Pancreas (tissue), 10 donors: ENCODE measurements at regions of chr14 and their contacts with region 1.

Region 1: DNA sequence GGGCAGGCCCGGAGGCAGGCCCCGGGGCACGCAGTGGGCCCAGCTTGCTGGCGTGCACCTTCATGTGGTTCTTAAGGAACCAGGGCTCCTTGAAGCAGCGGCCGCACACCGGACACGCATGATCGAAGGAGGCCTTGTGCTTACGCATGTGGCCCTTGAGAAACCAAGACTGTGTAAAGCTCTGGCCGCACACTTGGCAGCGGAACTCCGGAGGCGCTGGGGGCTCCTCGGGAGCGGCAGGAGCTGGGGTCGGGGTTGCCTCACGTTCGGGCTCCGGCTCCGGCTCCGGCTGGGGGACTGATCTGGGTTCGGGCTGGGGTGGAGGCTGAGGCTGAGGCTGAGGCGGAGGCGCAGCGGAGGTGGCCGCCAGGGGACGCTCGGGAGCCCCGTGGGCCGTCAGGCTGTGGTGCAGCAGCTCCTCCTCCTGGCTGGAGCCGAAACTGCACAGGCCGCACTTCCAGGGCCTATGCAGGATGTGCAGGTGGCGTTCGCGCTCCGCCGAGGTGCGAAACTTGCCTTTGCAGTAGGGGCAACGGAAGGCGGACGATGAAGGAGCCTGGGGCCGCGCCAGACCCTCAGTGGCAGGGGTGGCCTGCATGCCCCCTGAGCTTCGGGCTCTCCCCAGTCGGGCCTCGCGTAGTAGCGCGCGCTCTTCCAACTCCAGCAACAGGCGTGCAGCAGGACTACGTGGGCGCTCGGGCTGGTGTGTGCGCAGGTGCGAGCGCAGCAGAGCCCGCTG is 6.0 kb downstream of the ZNF219 start:
- DNase-seq: peak; percentile 75 to 98 (median 91)
- ATAC-seq: peak; percentile 86 to 97 (median 92)
- H3K4me3 ChIP-seq: no peak overlapping the region
- H3K27ac ChIP-seq: no peak overlapping the region
- H3K4me1 ChIP-seq: peaks cover 0 to 3% (median 0%) of the 10 kb centered on the region in 3 donors
- H3K27me3 ChIP-seq: no peaks in the 10 kb centered on the region
- CTCF ChIP-seq: peak; percentile 100

Region 2: GRCh38 chr14:21014761-21015190 is 77.7 kb before region 1 on chr14:
- intact Hi-C with region 1: loop called in 1 of 3 experiments (anchors 5 kb)
- DNase-seq: peak; percentile 72 to 90 (median 79)
- ATAC-seq: peak; percentile 84 to 98 (median 94)
- H3K4me3 ChIP-seq: no peak overlapping the region
- H3K27ac ChIP-seq: no peak overlapping the region
- H3K4me1 ChIP-seq: no peaks in the 10 kb centered on the region
- H3K27me3 ChIP-seq: no peaks in the 10 kb centered on the region
- CTCF ChIP-seq: peak; percentile 89 to 94 (median 90)

Region 3: DNA sequence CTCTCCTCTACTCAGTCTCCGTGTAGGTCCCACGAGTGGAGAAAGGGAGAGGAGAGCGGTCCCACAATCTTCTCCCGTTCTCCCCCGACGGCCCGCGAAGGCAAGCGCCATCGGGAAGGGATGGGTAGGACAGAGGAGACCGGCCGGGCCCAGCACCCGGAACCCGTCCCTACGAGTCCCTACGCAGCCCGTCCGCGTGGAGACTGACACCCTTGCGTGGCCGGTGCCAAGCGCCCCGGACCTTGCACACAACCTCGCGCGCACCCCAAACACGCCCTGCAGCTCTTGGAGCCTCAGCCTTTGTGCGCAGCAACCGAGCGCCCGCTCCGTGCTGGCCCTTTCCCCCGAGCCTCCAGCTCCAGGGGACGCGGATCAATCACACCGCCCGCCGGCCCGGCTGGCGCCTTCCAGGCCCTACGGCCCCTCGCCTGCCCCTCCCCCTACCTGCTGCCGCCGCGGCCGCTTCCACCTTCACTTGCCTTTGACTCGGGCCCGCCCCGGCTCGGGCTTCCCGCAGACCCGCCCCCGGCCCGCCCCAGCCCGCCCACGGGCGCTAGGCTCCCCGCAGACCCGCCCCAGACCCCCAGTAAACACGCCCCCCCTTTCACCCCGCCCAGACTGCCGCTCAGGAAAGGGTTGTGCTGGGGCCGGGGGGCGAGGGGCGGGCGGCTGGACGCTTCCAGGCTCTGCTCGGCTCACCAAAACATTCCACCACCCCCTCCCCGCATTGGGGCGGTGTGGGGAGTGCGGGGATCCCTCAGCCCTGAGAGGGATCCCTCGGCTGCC is 67.7 kb before region 1 on chr14 and contains the start of gene NDRG2:
- intact Hi-C with region 1: loop called in 2 of 3 experiments (anchors 5 kb)
- DNase-seq: peak; percentile 84 to 94 (median 87)
- ATAC-seq: peak; percentile 94 to 96 (median 94)
- H3K4me3 ChIP-seq: peak within 1 kb of the TSS; percentile 62 to 95 (median 85)
- H3K27ac ChIP-seq: peak within 1 kb of the TSS; percentile 41 to 67 (median 64)
- H3K4me1 ChIP-seq: peaks cover 0 to 5% (median 3%) of the 10 kb centered on the region in 3 donors
- H3K27me3 ChIP-seq: no peaks in the 10 kb centered on the region
- CTCF ChIP-seq: no peak
- total RNA-seq, gene NDRG2: 37.5 to 75.4 (median 47.4) TPM